Panc1 (cell line): ENCODE measurements at regions of chr7 and their contacts with region 1.

Region 1: DNA sequence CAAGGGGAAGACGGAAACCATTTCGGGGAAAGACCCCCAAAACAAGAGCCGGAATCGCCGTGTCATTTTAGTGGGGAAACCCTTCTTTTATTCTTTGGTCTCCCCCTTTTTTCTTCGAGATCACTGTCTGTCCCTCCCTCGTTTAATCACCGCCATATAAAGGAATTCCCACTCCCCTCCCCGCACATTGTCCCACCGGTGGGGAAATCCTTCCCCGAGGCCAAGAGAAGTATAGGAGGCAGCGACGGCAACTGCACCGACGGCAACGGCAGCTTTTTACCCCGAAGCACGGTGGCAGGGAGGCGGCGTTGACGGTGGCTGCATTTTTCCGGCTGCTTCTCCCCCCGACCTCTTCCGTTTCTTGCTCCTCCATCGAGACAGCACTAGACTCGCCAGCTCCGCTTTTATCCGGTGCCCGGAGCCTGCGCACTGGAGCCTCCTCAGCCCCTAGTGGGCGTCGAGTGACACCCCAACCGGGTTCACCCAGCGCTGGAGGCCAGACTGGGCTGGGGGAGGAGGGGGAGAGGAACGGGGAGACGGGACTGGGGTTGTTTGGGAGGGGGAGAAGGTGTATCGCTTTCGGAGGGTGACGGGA is 687 bp upstream of the KMT2E start:
- DNase-seq: peak; percentile 87
- ATAC-seq: peak; percentile 80
- H3K4me3 ChIP-seq: peak overlapping the region; percentile 92 to 93
- H3K27ac ChIP-seq: peak overlapping the region; percentile 100
- H3K4me1 ChIP-seq: peaks cover 24% of the 10 kb centered on the region
- H3K27me3 ChIP-seq: no peaks in the 10 kb centered on the region
- CTCF ChIP-seq: peak; percentile 60

Region 2: GRCh38 chr7:105026750-105027149 is 13.4 kb after region 1 on chr7:
- CTCF ChIA-PET with region 1: no interaction called
- POLR2A ChIA-PET with region 1: interaction called, 10 read pairs
- in situ Hi-C with region 1: no loop called
- intact Hi-C with region 1: no loop called
- DNase-seq: no peak
- ATAC-seq: no peak
- H3K4me3 ChIP-seq: no peak overlapping the region
- H3K27ac ChIP-seq: no peak overlapping the region
- H3K4me1 ChIP-seq: peaks cover 25% of the 10 kb centered on the region
- H3K27me3 ChIP-seq: no peaks in the 10 kb centered on the region
- CTCF ChIP-seq: no peak

Region 3: DNA sequence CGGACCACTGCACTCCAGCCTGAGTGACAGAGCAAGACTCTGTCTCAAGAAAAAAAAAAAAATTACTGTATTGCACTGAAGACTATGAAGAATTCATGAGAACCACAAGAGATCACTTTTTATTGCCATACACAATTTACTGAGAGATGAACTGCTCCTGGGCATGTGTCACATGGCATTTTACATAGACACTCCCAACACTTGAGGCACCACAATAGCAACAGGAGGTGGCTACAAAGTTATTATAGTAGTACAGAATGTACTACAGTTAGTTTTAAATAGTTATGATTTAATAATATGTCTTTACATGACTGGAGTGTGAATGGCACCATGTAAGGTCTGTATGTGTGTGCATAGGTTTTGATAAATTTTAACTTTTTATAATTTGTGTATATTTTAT is 71.3 kb after region 1 on chr7:
- CTCF ChIA-PET with region 1: no interaction called
- POLR2A ChIA-PET with region 1: interaction called, 14 read pairs
- in situ Hi-C with region 1: no loop called
- intact Hi-C with region 1: no loop called
- DNase-seq: no peak
- ATAC-seq: no peak
- H3K4me3 ChIP-seq: no peak overlapping the region
- H3K27ac ChIP-seq: no peak overlapping the region
- H3K4me1 ChIP-seq: no peaks in the 10 kb centered on the region
- H3K27me3 ChIP-seq: no peaks in the 10 kb centered on the region
- CTCF ChIP-seq: no peak

Region 4: GRCh38 chr7:105112440-105113418 is 99.4 kb after region 1 on chr7:
- CTCF ChIA-PET with region 1: no interaction called
- POLR2A ChIA-PET with region 1: interaction called, 11 read pairs
- in situ Hi-C with region 1: no loop called
- intact Hi-C with region 1: no loop called
- DNase-seq: no peak
- ATAC-seq: peak; percentile 30; the same call in 1 of the 2 replicates
- H3K4me3 ChIP-seq: no peak overlapping the region
- H3K27ac ChIP-seq: no peak overlapping the region
- H3K4me1 ChIP-seq: no peaks in the 10 kb centered on the region; the same call in 1 of the 2 replicates
- H3K27me3 ChIP-seq: no peaks in the 10 kb centered on the region
- CTCF ChIP-seq: no peak

Region 5: GRCh38 chr7:105125745-105126144 is 112.4 kb after region 1 on chr7:
- CTCF ChIA-PET with region 1: no interaction called
- POLR2A ChIA-PET with region 1: no interaction called
- in situ Hi-C with region 1: no loop called
- intact Hi-C with region 1: no loop called
- DNase-seq: no peak
- ATAC-seq: no peak
- H3K4me3 ChIP-seq: no peak overlapping the region
- H3K27ac ChIP-seq: no peak overlapping the region
- H3K4me1 ChIP-seq: no peaks in the 10 kb centered on the region
- H3K27me3 ChIP-seq: no peaks in the 10 kb centered on the region
- CTCF ChIP-seq: no peak